ENCODE measurements at regions of chr19 and their contacts with region 1.

Region 1: DNA sequence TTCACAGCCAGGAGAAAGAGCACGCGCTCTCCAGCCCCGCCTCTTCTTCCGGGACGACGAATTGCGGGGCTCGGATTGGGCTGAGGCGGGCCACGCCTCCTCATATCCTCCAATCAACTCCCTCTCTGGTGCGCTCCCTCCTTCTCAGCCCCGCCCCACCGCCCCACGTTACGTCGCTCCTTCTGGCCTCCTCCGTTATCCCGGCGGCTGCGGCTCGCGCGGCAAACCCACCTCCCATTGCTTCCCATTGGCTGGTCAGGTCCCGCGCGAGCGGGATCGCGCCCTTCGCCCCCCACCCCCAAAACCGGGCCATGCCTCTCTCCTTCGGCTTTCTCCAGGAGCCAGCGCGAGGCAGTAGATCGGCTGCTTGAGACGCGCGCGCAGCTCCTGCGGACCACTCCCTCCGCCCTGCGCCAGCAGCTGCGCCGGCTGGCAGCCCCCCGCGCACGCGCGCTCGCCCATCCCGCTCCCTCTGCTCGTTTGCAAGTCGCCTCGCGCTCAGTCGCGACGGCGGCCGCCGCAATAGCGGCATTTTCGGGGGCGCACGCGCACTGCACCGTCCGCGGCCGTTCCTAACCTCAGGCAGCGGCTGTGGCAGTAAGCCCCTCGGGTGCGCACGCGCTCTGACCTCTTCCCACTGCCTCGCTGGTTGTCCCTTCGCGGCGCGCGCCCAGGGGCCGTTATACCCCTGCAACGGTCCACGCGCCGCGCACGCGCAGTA is 512 bp upstream of the ARHGAP35 start:
- DNase-seq: peak; percentile 98
- ATAC-seq: peak; percentile 75
- H3K4me3 ChIP-seq: peak overlapping the region; percentile 68
- H3K27ac ChIP-seq: peak overlapping the region; percentile 92
- H3K4me1 ChIP-seq: peaks cover 16% of the 10 kb centered on the region
- H3K27me3 ChIP-seq: no peaks in the 10 kb centered on the region
- CTCF ChIP-seq: no peak
- POLR2A ChIP-seq: peak; percentile 80
- RAD21 ChIP-seq: no peak

Region 2: DNA sequence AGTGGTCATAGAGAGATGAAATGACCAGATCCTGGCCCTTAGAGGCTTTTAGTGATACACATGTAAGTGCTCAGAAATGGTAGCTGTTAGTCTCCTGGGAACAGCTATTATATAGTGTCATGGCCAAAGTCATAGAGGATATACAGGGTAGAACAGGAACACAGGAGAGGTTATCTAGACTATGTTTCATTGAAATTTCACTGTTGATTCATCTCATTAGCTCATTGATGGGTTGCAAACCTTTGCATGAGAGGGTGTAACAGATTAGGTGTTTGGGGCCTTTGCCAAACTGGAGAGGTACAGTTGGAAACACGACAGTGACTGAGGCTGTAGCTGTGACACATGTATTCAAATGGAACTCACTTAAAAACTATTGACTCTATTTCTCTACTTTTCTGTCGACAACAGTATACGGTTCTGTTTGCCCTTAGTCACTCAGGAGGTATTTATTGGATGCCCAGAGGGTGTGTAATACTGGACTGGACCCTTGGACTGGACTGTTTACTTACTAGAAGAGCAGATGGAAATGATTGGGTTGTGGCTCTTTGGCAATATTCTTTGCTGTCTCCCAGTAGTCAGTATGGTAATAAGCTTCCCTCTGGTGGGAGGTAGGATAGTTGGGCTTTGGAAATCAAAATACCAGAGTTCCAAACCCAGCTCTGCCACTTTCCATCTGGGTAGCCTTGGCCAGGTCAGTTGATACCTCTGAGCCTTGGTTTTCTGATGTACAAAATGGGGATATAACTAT is 30.3 kb after region 1 on chr19:
- CTCF ChIA-PET with region 1: no interaction called
- POLR2A ChIA-PET with region 1: no interaction called
- dilution Hi-C with region 1: no loop called
- in situ Hi-C with region 1: no loop called
- intact Hi-C with region 1: loop called (anchors 1 kb)
- DNase-seq: peak; percentile 92
- ATAC-seq: peak; percentile 97
- H3K4me3 ChIP-seq: no peak overlapping the region
- H3K27ac ChIP-seq: peak overlapping the region; percentile 57
- H3K4me1 ChIP-seq: peaks cover 6% of the 10 kb centered on the region
- H3K27me3 ChIP-seq: no peaks in the 10 kb centered on the region
- CTCF ChIP-seq: no peak
- POLR2A ChIP-seq: no peak
- RAD21 ChIP-seq: peak; percentile 11; the same call in 1 of the 2 replicates

Region 3: GRCh38 chr19:46902402-46902766 is 42.1 kb after region 1 on chr19:
- CTCF ChIA-PET with region 1: no interaction called
- POLR2A ChIA-PET with region 1: no interaction called
- dilution Hi-C with region 1: no loop called
- in situ Hi-C with region 1: no loop called
- intact Hi-C with region 1: no loop called
- DNase-seq: peak; percentile 31
- ATAC-seq: peak; percentile 53
- H3K4me3 ChIP-seq: no peak overlapping the region
- H3K27ac ChIP-seq: peak overlapping the region; percentile 18; the same call in 1 of the 2 replicates
- H3K4me1 ChIP-seq: peaks cover 29% of the 10 kb centered on the region
- H3K27me3 ChIP-seq: no peaks in the 10 kb centered on the region
- CTCF ChIP-seq: no peak
- POLR2A ChIP-seq: no peak
- RAD21 ChIP-seq: no peak

Region 4: DNA sequence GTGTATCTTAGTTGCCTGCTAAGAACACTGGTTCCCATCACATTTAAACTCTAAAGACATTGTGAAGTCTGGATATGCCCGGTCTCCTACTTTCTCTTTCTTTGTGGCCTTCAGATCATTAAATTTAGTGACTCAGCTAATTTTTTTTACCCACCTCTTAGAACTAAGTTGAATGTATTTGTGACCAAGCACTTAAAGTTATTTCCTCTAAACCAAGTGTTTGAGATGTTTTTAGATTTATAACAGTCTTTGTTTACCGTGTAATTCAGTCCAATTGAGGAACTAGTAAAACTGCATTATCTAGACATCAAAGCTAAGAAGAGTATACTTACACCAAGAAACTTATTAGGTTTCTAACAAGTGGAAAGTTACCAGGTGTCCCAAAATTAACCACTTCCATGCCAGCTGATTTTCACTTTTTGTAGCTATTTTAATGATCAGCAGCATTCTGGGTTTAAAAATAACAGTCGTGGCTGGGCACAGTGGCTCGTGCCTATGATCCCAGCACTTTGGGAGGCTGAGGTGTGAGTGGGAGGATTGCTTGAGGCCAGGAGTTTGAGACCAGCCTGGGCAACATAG is 53.7 kb after region 1 on chr19:
- CTCF ChIA-PET with region 1: no interaction called
- POLR2A ChIA-PET with region 1: no interaction called
- dilution Hi-C with region 1: no loop called
- in situ Hi-C with region 1: no loop called
- intact Hi-C with region 1: loop called (anchors 2 kb)
- DNase-seq: peak; percentile 49
- ATAC-seq: peak; percentile 42
- H3K4me3 ChIP-seq: no peak overlapping the region; the same call in 1 of the 2 replicates
- H3K27ac ChIP-seq: no peak overlapping the region
- H3K4me1 ChIP-seq: peaks cover 12% of the 10 kb centered on the region
- H3K27me3 ChIP-seq: no peaks in the 10 kb centered on the region
- CTCF ChIP-seq: no peak
- POLR2A ChIP-seq: no peak
- RAD21 ChIP-seq: no peak

Region 5: DNA sequence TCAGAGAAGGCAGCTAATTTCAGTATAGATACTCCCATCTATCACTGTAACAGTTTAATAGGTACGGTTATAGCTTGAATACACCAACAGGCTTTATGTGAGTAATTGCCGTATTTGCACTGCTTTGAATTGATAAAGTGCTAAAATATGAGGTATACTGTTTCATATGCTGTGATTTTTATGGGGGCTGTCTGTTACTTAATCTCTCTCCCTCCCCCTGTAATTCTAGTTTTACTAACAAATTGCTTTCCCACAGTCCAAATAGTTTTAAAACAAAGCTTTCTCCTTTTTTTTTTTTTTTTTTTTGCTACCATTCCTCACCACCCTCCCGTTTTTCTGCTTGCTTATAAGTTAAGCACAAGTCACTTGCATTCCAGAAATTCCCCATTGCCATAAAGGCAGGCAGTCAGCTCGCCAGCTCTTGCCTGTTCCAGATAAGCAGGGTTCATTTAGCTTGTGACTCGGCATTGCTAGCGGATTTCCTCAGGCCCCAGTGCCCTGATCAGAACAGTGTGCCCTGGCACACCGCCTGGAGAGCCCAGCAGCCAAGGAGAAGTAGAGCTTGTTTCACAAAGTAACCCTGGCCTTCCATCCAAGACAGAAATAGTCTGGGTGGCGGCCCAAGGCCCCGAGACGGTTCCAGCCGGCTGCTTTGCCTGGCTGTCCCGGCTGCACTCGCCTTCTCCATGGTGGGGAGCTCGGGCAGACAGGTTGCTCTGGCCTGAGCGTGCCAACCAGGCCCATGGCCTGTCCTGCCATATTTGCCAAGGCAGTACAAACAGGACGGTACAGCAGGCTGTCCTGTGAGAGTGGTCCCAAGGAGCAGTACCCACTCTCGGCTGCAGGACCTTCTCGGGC is 115.9 kb after region 1 on chr19:
- CTCF ChIA-PET with region 1: interaction called, 4 read pairs
- POLR2A ChIA-PET with region 1: no interaction called
- dilution Hi-C with region 1: no loop called
- in situ Hi-C with region 1: no loop called
- intact Hi-C with region 1: loop called (anchors 2 kb)
- DNase-seq: peak; percentile 93
- ATAC-seq: peak; percentile 83
- H3K4me3 ChIP-seq: no peak overlapping the region
- H3K27ac ChIP-seq: peak overlapping the region; percentile 79
- H3K4me1 ChIP-seq: peaks cover 32% of the 10 kb centered on the region
- H3K27me3 ChIP-seq: no peaks in the 10 kb centered on the region
- CTCF ChIP-seq: no peak
- POLR2A ChIP-seq: 0 out of 2 replicates have a peak, but pooled peaks have one; percentile 19
- RAD21 ChIP-seq: 0 out of 2 replicates have a peak, but pooled peaks have one; percentile 14

Measured in IMR-90 (cell line).